GM12878 (cell line): ENCODE measurements at regions of chr1 and their contacts with region 1.

Region 1: DNA sequence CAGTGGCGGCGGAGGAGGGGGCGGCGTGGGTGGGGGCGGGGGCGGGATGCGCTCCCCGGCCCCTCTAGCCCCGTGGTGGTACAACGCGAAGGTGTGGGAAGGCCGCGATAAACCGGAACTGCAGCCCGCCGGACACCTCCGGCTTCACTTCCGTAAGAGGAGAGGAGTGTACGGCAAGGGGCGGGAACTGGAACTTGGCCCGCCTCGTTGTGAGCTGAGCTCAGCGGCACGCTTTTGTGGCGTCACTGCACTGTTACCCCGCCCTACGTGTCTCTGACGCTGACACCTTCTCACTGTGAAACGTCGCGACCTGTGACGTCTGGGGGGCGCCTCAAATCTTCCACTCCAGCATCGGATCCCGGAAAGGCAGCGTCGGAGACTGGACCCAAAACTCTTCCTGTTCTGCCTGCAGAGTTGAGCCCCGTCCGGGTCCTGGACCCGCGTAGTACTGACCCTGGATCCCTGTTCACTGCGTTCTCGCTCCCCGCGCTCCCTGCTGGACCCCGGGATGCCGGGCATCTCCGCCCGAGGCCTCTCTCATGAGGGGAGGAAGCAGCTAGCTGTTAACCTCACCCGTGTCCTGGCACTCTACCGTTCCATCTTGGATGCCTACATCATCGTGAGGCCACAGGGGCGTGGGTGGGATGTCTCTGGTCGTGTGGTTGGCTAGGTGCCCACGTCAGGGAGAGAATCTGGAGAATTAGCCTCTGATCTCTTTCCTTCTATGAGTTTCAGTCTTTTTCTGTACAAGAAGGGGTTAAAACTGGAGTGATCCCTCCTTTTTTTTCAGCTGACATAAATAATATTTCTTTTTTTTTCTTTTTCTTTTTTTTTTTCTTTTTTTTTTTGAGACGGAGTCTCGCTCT is at the start of gene ISG20L2:
- DNase-seq: peak; percentile 92
- ATAC-seq: peak; percentile 85
- H3K4me3 ChIP-seq: peak within 1 kb of the TSS; percentile 100
- H3K27ac ChIP-seq: peak within 1 kb of the TSS; percentile 91
- H3K4me1 ChIP-seq: peaks cover 9% of the 10 kb centered on the region
- H3K27me3 ChIP-seq: no peaks in the 10 kb centered on the region
- CTCF ChIP-seq: no peak; a peak in 1 of 6 replicates
- EP300 ChIP-seq: peak in 1 of 2 experiments; percentile 14; a peak in 1 of 4 replicates
- POLR2A ChIP-seq: peak; percentile 92
- RAD21 ChIP-seq: no peak
- polyA plus RNA-seq, gene ISG20L2: 16.4 to 26.1 TPM

Region 2: DNA sequence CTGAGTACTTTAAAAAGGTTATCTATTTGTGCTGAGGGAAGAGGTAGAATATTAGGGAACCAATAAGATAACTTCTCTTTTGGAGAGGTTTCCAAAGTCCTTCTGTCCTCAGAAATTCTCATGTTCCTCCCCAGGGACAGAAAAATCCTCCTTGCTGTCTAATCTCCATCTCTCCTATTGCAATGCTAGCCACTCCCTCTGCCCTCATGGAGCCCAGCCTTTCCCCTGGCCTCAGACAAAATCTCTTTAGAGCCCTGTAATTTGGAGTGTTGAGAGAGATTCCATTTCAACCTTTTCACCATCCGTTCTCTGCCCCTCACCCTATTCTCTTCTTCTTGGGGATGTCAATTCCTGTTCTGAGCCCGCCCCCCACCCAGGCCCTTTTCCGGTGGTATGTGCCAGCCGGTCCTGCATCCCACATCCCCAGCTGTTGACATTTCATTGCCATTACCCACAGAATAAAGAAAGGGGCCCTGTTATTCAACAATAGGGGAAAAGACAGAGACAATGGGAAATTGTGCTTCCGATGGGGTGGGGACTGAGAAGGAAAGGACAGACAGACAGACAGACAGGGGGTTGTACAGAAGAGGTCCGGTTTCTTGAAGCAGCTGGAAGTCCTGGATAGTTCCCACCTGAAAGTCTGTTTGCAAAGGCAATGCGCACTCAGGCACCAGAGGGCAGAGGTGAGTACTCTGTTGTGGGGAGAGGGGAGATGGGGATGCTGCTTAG is 109.8 kb before region 1 on chr1 and contains the start of gene HAPLN2:
- CTCF ChIA-PET with region 1: interaction called, 16 read pairs
- POLR2A ChIA-PET with region 1: no interaction called
- RAD21 ChIA-PET with region 1: interaction called, 3 read pairs
- SMC1A ChIA-PET with region 1: interaction called, 4 read pairs
- in situ Hi-C with region 1: no loop called
- intact Hi-C with region 1: loop called (anchors 10 kb)
- DNase-seq: no peak
- ATAC-seq: peak; percentile 68
- H3K4me3 ChIP-seq: no peak within 1 kb of the TSS
- H3K27ac ChIP-seq: no peak within 1 kb of the TSS
- H3K4me1 ChIP-seq: no peaks in the 10 kb centered on the region; the same call in 1 of the 2 replicates
- H3K27me3 ChIP-seq: peaks cover 10% of the 10 kb centered on the region in 2 experiments
- CTCF ChIP-seq: peak; percentile 48 to 60 (median 53)
- EP300 ChIP-seq: no peak
- POLR2A ChIP-seq: no peak
- RAD21 ChIP-seq: no peak
- polyA plus RNA-seq, gene HAPLN2: not detected

Region 3: DNA sequence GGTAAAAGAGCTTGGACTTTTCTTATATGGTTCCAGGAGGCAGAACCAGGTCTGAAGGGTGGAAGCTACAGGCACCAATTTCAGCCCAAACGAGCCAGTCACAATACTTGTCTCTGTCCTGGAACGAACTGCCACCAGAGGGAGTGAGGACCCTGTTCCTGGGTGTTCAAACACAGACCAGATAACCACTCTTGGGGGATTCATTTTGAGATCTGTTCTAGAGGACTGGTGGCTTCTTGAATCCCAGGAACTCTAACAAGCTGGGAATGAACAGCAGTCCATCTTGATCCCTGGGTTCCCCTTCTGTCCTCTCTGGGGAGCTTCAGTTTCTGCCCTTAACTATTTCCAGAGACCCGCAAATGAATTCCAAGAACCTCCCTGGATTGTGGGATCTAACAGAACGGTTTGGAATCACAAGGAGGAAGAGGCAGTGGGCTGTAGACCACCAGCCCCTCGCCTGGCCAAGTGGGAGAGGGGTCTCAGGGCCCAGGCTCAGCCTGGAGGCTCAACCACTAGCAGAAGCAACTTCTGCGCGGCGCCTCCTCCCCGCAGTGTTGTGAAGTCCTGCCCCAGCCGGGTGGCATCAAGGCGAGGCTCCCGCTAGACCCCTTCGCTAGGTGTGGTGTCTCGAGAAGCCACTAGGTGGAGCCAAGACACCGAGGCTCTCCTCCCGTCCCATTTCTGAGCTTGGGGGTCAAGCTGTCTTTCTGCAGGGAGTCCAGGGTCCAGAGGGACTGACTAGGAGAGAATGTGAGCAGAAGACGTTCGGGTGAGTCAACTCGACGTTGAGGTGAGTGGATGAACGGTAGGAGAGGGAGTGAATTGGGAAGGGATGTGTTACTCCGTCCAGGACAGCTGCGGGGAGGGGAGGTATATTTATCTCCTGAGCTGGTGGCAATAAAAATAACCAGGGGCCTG is 39.5 kb before region 1 on chr1:
- CTCF ChIA-PET with region 1: interaction called, 433 read pairs
- POLR2A ChIA-PET with region 1: interaction called, 21 read pairs
- RAD21 ChIA-PET with region 1: interaction called, 173 read pairs
- SMC1A ChIA-PET with region 1: interaction called, 168 read pairs
- in situ Hi-C with region 1: no loop called
- intact Hi-C with region 1: loop called (anchors 1 kb)
- DNase-seq: no peak
- ATAC-seq: peak; percentile 97
- H3K4me3 ChIP-seq: no peak overlapping the region
- H3K27ac ChIP-seq: no peak overlapping the region
- H3K4me1 ChIP-seq: peaks cover 4% of the 10 kb centered on the region
- H3K27me3 ChIP-seq: peaks cover 18 to 33% of the 10 kb centered on the region in 2 experiments
- CTCF ChIP-seq: peak; percentile 92 to 97 (median 97)
- EP300 ChIP-seq: no peak
- POLR2A ChIP-seq: no peak
- RAD21 ChIP-seq: peak; percentile 91

Region 4: DNA sequence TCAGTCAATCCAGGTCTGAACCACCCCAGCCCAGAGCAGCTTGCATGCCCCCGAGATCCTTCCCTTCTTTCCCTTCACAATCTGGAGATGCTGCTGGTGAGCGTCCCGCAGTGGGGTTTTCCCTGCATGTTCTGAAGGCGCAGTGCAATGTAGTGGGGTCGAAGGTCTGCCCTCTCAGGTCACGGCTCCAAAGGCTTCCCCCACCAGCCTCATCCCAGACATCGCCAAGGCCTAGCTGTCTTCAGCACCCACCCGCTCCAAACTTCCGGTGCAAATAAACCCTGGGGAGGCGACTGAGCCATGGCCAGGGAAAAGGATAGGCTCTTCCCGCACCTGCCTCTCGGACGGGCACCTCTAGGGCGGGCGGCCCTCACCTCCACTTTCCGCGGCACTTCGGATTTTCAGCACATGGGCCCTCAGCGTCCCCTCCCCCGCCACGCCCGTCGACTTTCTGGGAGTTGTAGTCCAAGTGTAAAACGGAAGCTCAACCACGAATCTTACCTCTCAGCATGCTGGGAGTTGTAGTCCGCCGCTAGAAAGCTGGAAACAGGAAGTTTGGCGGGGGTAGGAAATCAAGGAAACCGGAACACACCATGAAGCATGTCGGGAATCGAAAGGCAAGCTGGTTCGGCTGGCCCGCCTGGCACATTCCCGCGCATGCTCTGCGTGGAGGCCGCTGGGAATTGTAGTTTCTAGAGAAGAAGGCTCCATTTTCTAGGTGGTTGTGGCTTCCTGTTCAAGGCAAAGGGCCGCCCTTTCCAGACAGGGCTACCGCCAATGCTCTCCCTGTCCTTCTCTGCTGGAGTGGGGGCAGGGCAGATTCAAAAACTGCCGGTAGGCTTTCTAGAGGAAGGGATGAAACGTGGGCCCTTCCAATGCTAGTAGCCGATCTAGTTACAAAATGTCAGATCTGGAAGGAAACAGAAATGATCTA is 12.1 kb after region 1 on chr1 and contains the start of gene MRPL24:
- CTCF ChIA-PET with region 1: interaction called, 56 read pairs
- POLR2A ChIA-PET with region 1: interaction called, 75 read pairs
- RAD21 ChIA-PET with region 1: interaction called, 26 read pairs
- SMC1A ChIA-PET with region 1: interaction called, 57 read pairs
- in situ Hi-C with region 1: no loop called
- intact Hi-C with region 1: loop called (anchors 1 kb)
- DNase-seq: peak; percentile 99
- ATAC-seq: peak; percentile 93
- H3K4me3 ChIP-seq: peak within 1 kb of the TSS; percentile 68
- H3K27ac ChIP-seq: peak within 1 kb of the TSS; percentile 76
- H3K4me1 ChIP-seq: peaks cover 5% of the 10 kb centered on the region
- H3K27me3 ChIP-seq: no peaks in the 10 kb centered on the region
- CTCF ChIP-seq: no peak
- EP300 ChIP-seq: no peak; a peak in 2 of 4 replicates
- POLR2A ChIP-seq: peak; percentile 89
- RAD21 ChIP-seq: no peak
- polyA plus RNA-seq, gene MRPL24: 245 to 269 TPM

Region 5: DNA sequence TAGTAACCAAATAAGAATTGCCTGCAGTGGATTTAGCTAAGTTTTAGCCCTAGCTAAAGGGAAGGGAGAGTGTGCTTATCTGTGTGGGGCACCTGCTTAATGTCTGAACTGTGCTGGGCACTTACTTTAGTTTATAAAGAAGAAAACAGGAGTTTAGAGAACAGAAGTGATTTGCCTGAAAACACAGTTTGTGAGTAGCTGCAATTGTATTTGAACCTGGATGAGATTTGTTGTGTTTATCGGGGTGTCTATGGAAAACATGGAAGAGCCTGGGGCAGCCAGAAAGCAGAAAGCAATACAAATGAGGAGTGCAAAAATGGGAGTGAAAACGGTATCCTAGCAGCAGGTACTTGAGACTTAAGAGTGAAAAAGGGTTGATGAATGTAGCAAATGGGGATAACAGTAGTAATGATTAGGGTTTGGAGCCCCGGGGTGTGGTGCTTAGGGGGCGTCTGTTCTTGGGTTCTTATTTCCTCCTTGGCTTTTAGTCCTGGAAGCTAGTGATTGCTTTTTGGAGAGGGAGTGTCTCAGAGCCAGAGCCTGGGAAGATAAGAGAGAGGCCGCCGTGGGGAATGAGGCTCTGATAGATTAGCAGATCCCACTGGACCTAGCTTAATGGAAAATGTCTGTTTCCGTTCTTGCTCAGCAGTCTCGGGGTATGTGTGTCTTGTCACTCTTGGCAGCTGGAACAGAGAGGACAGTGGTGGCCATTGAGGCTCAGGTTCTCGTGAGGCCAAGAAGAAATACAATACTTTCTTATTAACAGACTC is 44.1 kb after region 1 on chr1:
- CTCF ChIA-PET with region 1: interaction called, 152 read pairs
- POLR2A ChIA-PET with region 1: interaction called, 71 read pairs
- RAD21 ChIA-PET with region 1: interaction called, 59 read pairs
- SMC1A ChIA-PET with region 1: interaction called, 108 read pairs
- in situ Hi-C with region 1: no loop called
- intact Hi-C with region 1: no loop called
- DNase-seq: no peak
- ATAC-seq: peak; percentile 6; the same call in 2 of the 3 replicates
- H3K4me3 ChIP-seq: peak overlapping the region; percentile 42; the same call in 1 of the 2 replicates
- H3K27ac ChIP-seq: no peak overlapping the region
- H3K4me1 ChIP-seq: no peaks in the 10 kb centered on the region
- H3K27me3 ChIP-seq: no peaks in the 10 kb centered on the region
- CTCF ChIP-seq: no peak
- EP300 ChIP-seq: no peak
- POLR2A ChIP-seq: no peak
- RAD21 ChIP-seq: no peak

Region 6: GRCh38 chr1:156813750-156814570 is 85.1 kb after region 1 on chr1:
- CTCF ChIA-PET with region 1: interaction called, 18 read pairs
- POLR2A ChIA-PET with region 1: interaction called, 6 read pairs
- RAD21 ChIA-PET with region 1: interaction called, 7 read pairs
- SMC1A ChIA-PET with region 1: interaction called, 15 read pairs
- in situ Hi-C with region 1: no loop called
- intact Hi-C with region 1: no loop called
- DNase-seq: no peak
- ATAC-seq: peak; percentile 69
- H3K4me3 ChIP-seq: peak overlapping the region; percentile 59; the same call in 1 of the 2 replicates
- H3K27ac ChIP-seq: no peak overlapping the region
- H3K4me1 ChIP-seq: peaks cover 20% of the 10 kb centered on the region
- H3K27me3 ChIP-seq: no peaks in the 10 kb centered on the region
- CTCF ChIP-seq: peak; percentile 57 to 80 (median 57)
- EP300 ChIP-seq: no peak
- POLR2A ChIP-seq: peak; percentile 68
- RAD21 ChIP-seq: no peak

Region 7: GRCh38 chr1:156892190-156893047 is 163.6 kb after region 1 on chr1:
- CTCF ChIA-PET with region 1: interaction called, 97 read pairs
- POLR2A ChIA-PET with region 1: interaction called, 3 read pairs
- RAD21 ChIA-PET with region 1: interaction called, 46 read pairs
- SMC1A ChIA-PET with region 1: interaction called, 50 read pairs
- in situ Hi-C with region 1: no loop called
- intact Hi-C with region 1: loop called (anchors 1 kb)
- DNase-seq: no peak
- ATAC-seq: peak; percentile 95
- H3K4me3 ChIP-seq: no peak overlapping the region
- H3K27ac ChIP-seq: no peak overlapping the region
- H3K4me1 ChIP-seq: no peaks in the 10 kb centered on the region
- H3K27me3 ChIP-seq: peaks cover 5 to 11% of the 10 kb centered on the region in 2 experiments
- CTCF ChIP-seq: peak; percentile 63 to 87 (median 68)
- EP300 ChIP-seq: no peak
- POLR2A ChIP-seq: no peak
- RAD21 ChIP-seq: peak; percentile 38; the same call in 1 of the 2 replicates